Activated CD4-positive, alpha-beta memory T cell treated with anti-CD3 and anti-CD28 coated beads for 36 hours (primary cell): ENCODE measurements at regions of chr4 and their contacts with region 1.

Region 1: GRCh38 chr4:146450524-146450923 is 71.2 kb downstream of the SLC10A7 start:
- DNase-seq: peak; percentile 31
- H3K4me3 Mint-ChIP-seq: no peak overlapping the region
- H3K27ac Mint-ChIP-seq: peak overlapping the region; percentile 31
- H3K4me1 Mint-ChIP-seq: peaks cover 27% of the 10 kb centered on the region
- H3K27me3 Mint-ChIP-seq: no peaks in the 10 kb centered on the region

Region 2: DNA sequence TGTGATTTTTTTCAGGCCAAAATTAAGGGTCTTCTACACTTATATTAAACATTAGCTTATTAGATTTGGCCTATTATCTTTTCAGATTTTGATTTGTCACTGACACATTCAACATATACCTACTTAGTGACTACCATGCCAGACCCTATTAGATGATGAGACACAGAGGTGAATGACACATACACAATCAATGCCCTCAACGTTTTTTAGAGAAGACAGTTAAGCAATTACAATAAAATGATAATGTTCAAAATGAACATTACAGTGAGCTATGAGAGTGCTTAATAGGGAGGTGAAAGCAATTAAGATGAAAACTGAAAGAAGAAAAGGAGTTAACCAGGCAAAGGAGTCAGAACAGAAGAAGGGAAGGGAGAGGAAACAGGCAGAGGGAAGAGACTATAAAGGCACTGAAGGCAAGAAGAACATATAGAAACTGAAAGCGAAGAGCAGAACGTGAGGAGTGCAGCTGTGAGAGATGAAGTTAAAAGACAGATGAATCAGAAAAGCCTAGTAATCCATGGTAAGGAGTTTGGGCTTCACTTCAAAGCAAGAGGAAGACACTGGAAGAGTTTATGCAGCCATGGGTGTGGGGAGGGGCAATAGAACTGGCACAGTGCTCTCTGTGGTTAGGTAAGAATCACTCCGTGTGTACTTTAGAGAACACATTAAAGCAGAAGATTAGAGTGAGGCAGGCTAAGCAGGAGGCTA is 117.2 kb before region 1 on chr4:
- CTCF ChIA-PET with region 1: no interaction called
- POLR2A ChIA-PET with region 1: no interaction called
- intact Hi-C with region 1: no loop called
- DNase-seq: peak; percentile 37
- H3K4me3 Mint-ChIP-seq: no peak overlapping the region
- H3K27ac Mint-ChIP-seq: no peak overlapping the region
- H3K4me1 Mint-ChIP-seq: no peaks in the 10 kb centered on the region
- H3K27me3 Mint-ChIP-seq: no peaks in the 10 kb centered on the region

Region 3: DNA sequence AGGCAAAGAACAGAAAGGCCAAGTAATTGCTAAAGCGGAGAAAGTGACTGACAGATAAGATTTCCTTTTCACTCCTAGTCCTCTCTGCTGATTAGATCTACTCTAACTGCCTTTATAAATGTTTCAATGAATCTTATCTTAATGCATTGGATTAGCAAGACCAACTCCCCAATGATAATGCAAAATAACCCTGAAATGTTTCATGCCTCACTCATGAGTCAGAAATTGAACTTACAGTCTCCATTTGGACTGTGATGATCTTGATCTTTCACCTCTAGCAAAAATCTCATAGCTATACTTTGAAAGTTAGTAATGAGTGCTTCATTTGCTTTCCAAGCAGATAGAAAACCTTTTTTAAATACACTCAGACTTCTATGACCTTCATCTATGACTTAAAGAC is 44.8 kb after region 1 on chr4:
- CTCF ChIA-PET with region 1: no interaction called
- POLR2A ChIA-PET with region 1: no interaction called
- intact Hi-C with region 1: loop called (anchors 2 kb)
- DNase-seq: no peak
- H3K4me3 Mint-ChIP-seq: no peak overlapping the region
- H3K27ac Mint-ChIP-seq: no peak overlapping the region
- H3K4me1 Mint-ChIP-seq: peaks cover 22% of the 10 kb centered on the region
- H3K27me3 Mint-ChIP-seq: no peaks in the 10 kb centered on the region